ENCODE measurements at regions of chr19 and their contacts with region 1.

Region 1: GRCh38 chr19:6476155-6476895 is 5.3 kb downstream of the DENND1C start:
- DNase-seq: peak; percentile 88
- ATAC-seq: peak; percentile 78
- H3K4me3 ChIP-seq: peak overlapping the region in 2 of 3 experiments; percentile 41 to 53; a peak in 4 of 6 replicates
- H3K27ac ChIP-seq: peak overlapping the region; percentile 50
- H3K4me1 ChIP-seq: peaks cover 22% of the 10 kb centered on the region; the same call in 1 of the 2 replicates
- H3K27me3 ChIP-seq: peaks cover 2 to 16% of the 10 kb centered on the region in 2 experiments; a peak in 3 of 5 replicates
- CTCF ChIP-seq: no peak
- EP300 ChIP-seq: no peak
- POLR2A ChIP-seq: peak; percentile 26 to 55; a peak in 3 of 4 replicates
- RAD21 ChIP-seq: no peak

Region 2: GRCh38 chr19:6464047-6464873 is 12.1 kb before region 1 on chr19 and contains the start of gene CRB3:
- CTCF ChIA-PET with region 1: no interaction called
- POLR2A ChIA-PET with region 1: interaction called, 13 read pairs
- in situ Hi-C with region 1: no loop called
- intact Hi-C with region 1: no loop called
- DNase-seq: peak; percentile 73
- ATAC-seq: peak; percentile 78
- H3K4me3 ChIP-seq: peak within 1 kb of the TSS; percentile 81 to 91 (median 89)
- H3K27ac ChIP-seq: peak within 1 kb of the TSS; percentile 65
- H3K4me1 ChIP-seq: peaks cover 9% of the 10 kb centered on the region
- H3K27me3 ChIP-seq: no peaks in the 10 kb centered on the region
- CTCF ChIP-seq: no peak
- EP300 ChIP-seq: no peak
- POLR2A ChIP-seq: peak in 1 of 2 experiments; percentile 81
- RAD21 ChIP-seq: peak; percentile 32; the same call in 1 of the 2 replicates
- total RNA-seq, gene CRB3: 21.9 and 25.6 TPM in 2 replicates

Measured in HepG2 (cell line).